Activated naive CD4-positive, alpha-beta T cell treated with anti-CD3 and anti-CD28 coated beads for 36 hours (primary cell): ENCODE measurements at regions of chr2 and their contacts with region 1.

Region 1: DNA sequence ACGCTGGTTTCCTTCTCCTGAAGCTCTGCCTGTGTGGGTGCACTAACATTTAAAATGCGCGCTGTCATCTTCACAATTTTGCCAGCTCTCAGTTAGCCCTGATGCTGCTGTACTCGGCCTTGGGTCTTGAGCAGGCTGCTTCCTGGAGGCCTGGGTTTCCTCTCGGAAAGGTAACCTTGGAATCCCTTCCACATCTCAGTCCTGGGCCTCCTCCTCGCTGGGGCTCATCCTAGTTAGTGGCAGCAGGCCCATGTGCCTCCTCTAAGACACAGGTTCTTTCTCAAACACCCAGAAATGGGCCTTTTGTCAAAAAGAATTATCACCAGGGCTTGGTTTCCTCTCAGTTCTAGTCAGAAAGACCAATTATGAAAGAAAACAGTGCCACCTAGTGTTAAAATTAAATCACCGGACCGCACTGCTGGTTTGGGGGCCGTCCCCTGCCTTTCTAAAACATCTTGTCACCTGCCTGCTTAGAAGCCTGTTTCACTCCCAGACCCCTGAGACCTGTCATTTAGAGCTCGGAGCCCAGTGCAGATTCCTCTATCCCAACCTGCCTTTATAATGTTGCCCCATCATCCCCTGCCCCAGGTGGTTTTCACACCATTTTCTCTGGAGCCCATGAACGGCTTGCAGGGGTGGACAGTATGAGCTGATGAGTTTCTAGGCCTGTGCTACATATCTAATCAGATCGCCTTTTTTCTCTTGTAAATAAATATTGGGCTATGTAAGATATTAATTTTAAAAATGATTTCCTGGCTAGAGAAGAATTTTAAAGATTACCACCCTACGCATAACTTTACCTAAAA is 42.4 kb downstream of the HK2 start:
- DNase-seq: peak; percentile 62
- H3K4me3 Mint-ChIP-seq: no peak overlapping the region
- H3K27ac Mint-ChIP-seq: no peak overlapping the region
- H3K4me1 Mint-ChIP-seq: no peaks in the 10 kb centered on the region
- H3K27me3 Mint-ChIP-seq: no peaks in the 10 kb centered on the region

Region 2: GRCh38 chr2:74690571-74690970 is 185.7 kb before region 1 on chr2:
- CTCF ChIA-PET with region 1: interaction called, 9 read pairs
- intact Hi-C with region 1: loop called (anchors 1 kb)
- DNase-seq: peak; percentile 46
- H3K4me3 Mint-ChIP-seq: no peak overlapping the region
- H3K27ac Mint-ChIP-seq: no peak overlapping the region
- H3K4me1 Mint-ChIP-seq: no peaks in the 10 kb centered on the region
- H3K27me3 Mint-ChIP-seq: no peaks in the 10 kb centered on the region

Region 3: GRCh38 chr2:74715078-74715791 is 161.0 kb before region 1 on chr2:
- CTCF ChIA-PET with region 1: interaction called, 34 read pairs
- intact Hi-C with region 1: loop called (anchors 1 kb)
- DNase-seq: peak; percentile 88
- H3K4me3 Mint-ChIP-seq: peak overlapping the region; percentile 81
- H3K27ac Mint-ChIP-seq: no peak overlapping the region
- H3K4me1 Mint-ChIP-seq: peaks cover 7% of the 10 kb centered on the region
- H3K27me3 Mint-ChIP-seq: peaks cover 11% of the 10 kb centered on the region

Region 4: DNA sequence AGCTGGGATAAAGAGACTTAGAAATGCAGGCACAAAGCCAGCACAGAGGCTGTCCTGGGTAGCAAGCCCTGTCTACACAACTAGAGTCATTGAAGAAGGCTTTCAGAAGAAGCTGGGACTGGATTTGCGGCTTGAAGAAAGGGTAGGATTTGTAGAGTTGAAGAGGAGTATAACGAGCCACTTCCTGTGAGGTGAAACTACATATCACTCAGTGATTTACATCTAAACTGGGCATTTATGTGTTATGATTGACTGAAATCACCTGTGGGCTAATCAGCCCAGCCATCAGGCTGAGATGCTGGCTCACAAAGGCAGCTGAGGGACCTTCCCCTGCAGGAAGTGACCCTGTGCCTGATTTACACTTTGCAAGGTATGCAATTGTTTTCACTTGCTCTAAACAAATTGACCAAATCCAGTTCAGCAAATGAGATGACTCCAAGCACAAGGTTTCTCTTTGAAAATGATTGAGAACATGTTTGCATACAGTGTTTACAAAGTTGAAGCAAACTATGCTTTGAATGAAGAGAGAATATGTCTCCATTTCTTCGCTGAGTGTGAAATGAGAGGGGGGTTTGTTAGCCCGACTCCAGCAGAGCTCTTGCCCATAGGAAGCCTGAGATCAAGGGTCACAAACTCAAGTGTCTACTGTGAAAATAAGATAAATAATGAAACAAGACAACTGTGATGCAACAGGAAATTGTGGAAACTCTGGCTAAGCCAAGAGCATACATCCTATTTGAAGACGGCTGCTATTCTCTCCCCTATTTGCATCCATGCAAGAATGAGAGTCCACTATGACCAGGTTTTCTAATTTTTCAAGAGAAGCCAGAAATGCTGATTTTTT is 111.6 kb before region 1 on chr2:
- CTCF ChIA-PET with region 1: interaction called, 3 read pairs
- intact Hi-C with region 1: loop called (anchors 5 kb)
- DNase-seq: no peak
- H3K4me3 Mint-ChIP-seq: no peak overlapping the region
- H3K27ac Mint-ChIP-seq: no peak overlapping the region
- H3K4me1 Mint-ChIP-seq: peaks cover 14% of the 10 kb centered on the region
- H3K27me3 Mint-ChIP-seq: no peaks in the 10 kb centered on the region

Region 5: DNA sequence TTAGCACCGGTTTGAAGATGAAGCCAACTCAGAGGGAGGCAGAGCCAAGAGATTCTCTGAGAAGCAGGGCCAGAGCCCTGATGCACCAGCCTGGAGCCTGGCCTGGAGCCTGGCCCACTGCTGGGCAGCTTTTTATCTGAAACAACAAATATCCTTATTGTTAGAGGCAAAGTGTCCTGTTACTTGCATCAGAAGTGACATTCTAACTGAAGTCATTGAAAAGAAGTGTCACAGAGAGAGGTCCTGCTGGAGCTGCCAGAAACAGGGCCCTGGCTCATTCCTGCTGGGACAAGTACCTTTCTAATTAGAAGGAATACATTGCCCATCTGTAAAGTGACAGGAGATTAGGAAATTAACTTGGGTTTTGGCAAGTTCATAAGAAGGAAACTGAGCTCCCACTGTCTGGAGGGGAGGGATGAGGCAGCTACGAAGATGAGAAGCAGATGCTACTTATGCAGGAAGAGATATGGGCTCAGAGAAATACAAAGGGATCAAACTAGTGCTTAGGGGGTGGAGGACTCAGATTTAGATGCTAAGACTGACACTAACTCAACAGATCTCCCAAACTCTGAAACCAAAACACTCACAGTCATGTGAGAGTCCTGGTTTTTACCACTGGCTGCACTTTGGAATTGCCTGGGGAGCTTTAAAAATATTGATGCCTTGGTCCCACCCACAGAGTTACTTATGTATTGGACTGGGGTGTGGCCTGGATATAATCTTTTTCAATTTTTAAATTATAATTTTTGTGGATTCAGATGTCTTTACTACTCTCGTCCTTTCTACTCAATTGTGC is 53.3 kb before region 1 on chr2:
- CTCF ChIA-PET with region 1: no interaction called
- intact Hi-C with region 1: no loop called
- DNase-seq: no peak
- H3K4me3 Mint-ChIP-seq: no peak overlapping the region
- H3K27ac Mint-ChIP-seq: no peak overlapping the region
- H3K4me1 Mint-ChIP-seq: no peaks in the 10 kb centered on the region
- H3K27me3 Mint-ChIP-seq: no peaks in the 10 kb centered on the region